ENCODE measurements at regions of chr7 and their contacts with region 1.

Region 1: DNA sequence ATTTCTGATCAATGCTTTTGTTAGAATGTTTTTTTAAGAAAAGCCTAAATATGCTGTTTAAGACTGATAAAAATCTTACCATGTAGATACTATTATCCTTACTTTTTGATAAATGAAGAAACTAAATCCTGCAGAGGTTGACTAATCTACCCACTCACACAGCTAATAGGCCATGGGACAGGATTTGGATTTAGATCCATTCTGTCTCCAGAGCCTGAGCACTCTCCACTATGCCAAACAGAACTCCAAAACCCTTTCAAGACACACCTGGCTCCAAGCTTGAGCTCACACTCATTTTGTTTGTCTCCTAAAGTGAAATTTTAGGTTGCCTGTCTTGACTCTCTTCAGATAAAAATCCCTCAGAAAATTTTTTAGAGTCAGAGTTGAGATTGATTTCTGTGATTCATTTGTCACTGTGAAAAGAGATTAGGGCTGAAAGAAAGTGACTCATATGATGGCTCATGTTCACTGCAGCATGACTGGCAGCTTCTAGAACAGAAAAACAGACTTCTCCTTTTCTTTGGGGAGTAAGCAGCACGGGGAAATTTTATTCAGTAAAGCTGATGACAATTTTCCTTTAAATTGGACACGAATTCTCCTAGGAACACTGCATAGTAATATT is 132.3 kb upstream of the POT1 start:
- DNase-seq: peak; percentile 19 to 82
- H3K4me3 ChIP-seq: no peak overlapping the region
- H3K27ac ChIP-seq: peak overlapping the region; percentile 85
- H3K4me1 ChIP-seq: peaks cover 19% of the 10 kb centered on the region
- H3K27me3 ChIP-seq: no peaks in the 10 kb centered on the region
- CTCF ChIP-seq: no peak

Region 2: GRCh38 chr7:124996778-124997177 is 65.1 kb before region 1 on chr7:
- CTCF ChIA-PET with region 1: no interaction called
- POLR2A ChIA-PET with region 1: no interaction called
- intact Hi-C with region 1: loop called (anchors 5 kb)
- DNase-seq: no peak
- H3K4me3 ChIP-seq: no peak overlapping the region
- H3K27ac ChIP-seq: no peak overlapping the region
- H3K4me1 ChIP-seq: peaks cover 24% of the 10 kb centered on the region
- H3K27me3 ChIP-seq: no peaks in the 10 kb centered on the region
- CTCF ChIP-seq: no peak

Region 3: DNA sequence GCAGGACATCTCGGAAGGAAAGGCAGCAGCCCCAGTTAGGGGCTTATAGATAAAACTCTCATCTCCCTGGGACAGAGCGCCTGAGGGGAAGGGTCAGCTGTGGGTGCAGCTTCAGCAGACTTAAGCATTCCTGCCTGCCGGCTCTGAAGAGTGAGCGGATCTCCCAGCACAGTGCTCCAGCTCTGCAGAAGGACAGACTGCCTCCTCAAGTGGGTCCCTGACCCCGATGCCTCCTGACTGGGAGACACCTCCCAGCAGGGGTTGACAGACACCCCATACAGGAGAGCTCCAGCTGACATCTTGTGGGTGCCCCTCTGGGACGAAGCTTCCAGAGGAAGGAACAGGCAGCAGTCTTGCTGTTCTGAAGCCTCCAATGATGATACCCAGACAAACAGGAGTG is 15.1 kb before region 1 on chr7:
- CTCF ChIA-PET with region 1: no interaction called
- POLR2A ChIA-PET with region 1: no interaction called
- intact Hi-C with region 1: no loop called
- DNase-seq: no peak
- H3K4me3 ChIP-seq: no peak overlapping the region
- H3K27ac ChIP-seq: no peak overlapping the region
- H3K4me1 ChIP-seq: no peaks in the 10 kb centered on the region
- H3K27me3 ChIP-seq: no peaks in the 10 kb centered on the region
- CTCF ChIP-seq: no peak

Region 4: DNA sequence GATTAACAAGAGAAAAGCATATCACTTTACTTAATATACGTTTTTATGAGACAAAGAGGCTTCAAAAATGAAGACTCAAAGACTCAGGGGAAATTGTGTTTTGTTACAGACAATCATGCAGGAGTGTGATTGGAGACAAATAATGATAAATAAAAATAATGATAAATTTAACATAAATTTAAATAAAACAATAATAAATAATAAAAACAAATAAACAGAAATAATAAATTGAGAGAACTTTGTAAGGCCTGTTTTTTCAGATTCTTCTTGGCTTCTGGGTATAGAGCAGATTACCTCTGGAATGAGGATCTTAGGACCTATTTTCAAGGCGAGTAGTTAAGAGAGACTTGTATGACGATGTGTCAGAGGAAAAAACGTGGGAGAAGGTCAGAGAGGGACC is 139.1 kb after region 1 on chr7:
- CTCF ChIA-PET with region 1: interaction called, 3 read pairs
- POLR2A ChIA-PET with region 1: no interaction called
- intact Hi-C with region 1: loop called (anchors 10 kb)
- DNase-seq: no peak
- H3K4me3 ChIP-seq: no peak overlapping the region
- H3K27ac ChIP-seq: no peak overlapping the region
- H3K4me1 ChIP-seq: no peaks in the 10 kb centered on the region
- H3K27me3 ChIP-seq: no peaks in the 10 kb centered on the region
- CTCF ChIP-seq: no peak

Region 5: DNA sequence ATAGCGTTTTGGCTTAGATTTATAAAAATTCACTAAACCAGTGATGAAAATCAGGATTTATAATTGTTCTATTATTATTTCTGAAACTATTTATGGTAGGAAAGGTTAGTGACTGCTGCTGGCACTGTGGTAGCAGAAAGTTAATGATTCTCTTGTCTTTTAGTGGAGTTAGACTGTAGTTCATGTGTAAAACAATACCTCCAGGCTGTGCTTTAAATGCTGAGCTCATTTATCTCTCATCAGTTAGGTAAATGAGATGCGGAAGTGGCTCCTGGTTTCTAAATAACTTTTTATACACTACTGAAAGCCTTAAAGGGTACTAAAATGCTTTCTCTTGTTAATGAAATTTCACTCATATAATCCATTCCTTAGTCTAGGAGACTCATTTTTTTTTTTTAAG is 194.6 kb after region 1 on chr7:
- CTCF ChIA-PET with region 1: no interaction called
- POLR2A ChIA-PET with region 1: no interaction called
- intact Hi-C with region 1: loop called (anchors 5 kb)
- DNase-seq: no peak
- H3K4me3 ChIP-seq: no peak overlapping the region
- H3K27ac ChIP-seq: no peak overlapping the region
- H3K4me1 ChIP-seq: no peaks in the 10 kb centered on the region
- H3K27me3 ChIP-seq: no peaks in the 10 kb centered on the region
- CTCF ChIP-seq: no peak

Region 6: GRCh38 chr7:125316466-125316865 is 254.6 kb after region 1 on chr7:
- CTCF ChIA-PET with region 1: interaction called, 3 read pairs
- POLR2A ChIA-PET with region 1: no interaction called
- intact Hi-C with region 1: loop called (anchors 1 kb)
- DNase-seq: peak; percentile 33 to 37
- H3K4me3 ChIP-seq: no peak overlapping the region
- H3K27ac ChIP-seq: no peak overlapping the region
- H3K4me1 ChIP-seq: no peaks in the 10 kb centered on the region
- H3K27me3 ChIP-seq: no peaks in the 10 kb centered on the region
- CTCF ChIP-seq: peak; percentile 28; the same call in 1 of the 2 replicates

Region 7: GRCh38 chr7:125391921-125392320 is 330.0 kb after region 1 on chr7:
- CTCF ChIA-PET with region 1: no interaction called
- POLR2A ChIA-PET with region 1: no interaction called
- intact Hi-C with region 1: no loop called
- DNase-seq: no peak
- H3K4me3 ChIP-seq: no peak overlapping the region
- H3K27ac ChIP-seq: no peak overlapping the region
- H3K4me1 ChIP-seq: no peaks in the 10 kb centered on the region
- H3K27me3 ChIP-seq: no peaks in the 10 kb centered on the region
- CTCF ChIP-seq: no peak

Region 8: DNA sequence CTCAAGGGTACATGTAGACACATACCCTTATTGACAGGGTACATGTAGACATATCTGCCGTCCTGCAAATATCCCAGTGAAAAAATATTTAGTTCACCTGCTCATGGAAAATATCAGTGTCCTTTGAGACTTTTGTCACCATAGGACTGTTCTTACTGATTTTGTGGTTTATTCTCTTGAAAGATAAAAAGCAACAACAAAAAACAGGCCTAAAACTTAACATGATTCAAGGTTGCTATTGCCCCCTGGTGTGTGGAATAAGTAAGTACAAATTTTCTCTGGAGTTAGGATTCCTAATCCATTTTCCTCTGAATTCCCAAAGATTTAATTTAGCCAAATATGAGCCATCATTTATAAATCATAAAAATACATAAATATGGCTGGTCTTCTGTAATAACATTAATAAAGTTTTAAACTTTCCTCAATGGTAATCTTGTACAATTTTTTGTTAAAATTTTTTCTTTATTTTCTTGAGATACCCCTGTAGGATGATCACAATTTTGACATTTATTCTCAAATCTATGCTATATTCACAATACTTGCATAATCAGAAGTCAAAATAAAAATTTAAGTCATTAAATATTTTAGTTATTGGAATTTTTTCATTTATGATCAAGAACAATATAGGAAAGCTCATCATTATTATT is 609.2 kb after region 1 on chr7:
- CTCF ChIA-PET with region 1: no interaction called
- POLR2A ChIA-PET with region 1: no interaction called
- intact Hi-C with region 1: loop called (anchors 2 kb)
- DNase-seq: no peak
- H3K4me3 ChIP-seq: no peak overlapping the region
- H3K27ac ChIP-seq: no peak overlapping the region
- H3K4me1 ChIP-seq: no peaks in the 10 kb centered on the region
- H3K27me3 ChIP-seq: no peaks in the 10 kb centered on the region
- CTCF ChIP-seq: peak; percentile 79

Region 9: GRCh38 chr7:125934539-125934938 is 872.7 kb after region 1 on chr7:
- CTCF ChIA-PET with region 1: no interaction called
- POLR2A ChIA-PET with region 1: no interaction called
- intact Hi-C with region 1: loop called (anchors 10 kb)
- DNase-seq: peak; percentile 47 to 61
- H3K4me3 ChIP-seq: no peak overlapping the region
- H3K27ac ChIP-seq: no peak overlapping the region
- H3K4me1 ChIP-seq: no peaks in the 10 kb centered on the region
- H3K27me3 ChIP-seq: no peaks in the 10 kb centered on the region
- CTCF ChIP-seq: no peak

Measured in PC-9 (cell line).